ENCODE measurements at regions of chr2 and their contacts with region 1.

Region 1: GRCh38 chr2:202289394-202290204 is 24.0 kb downstream of the NOP58 start:
- DNase-seq: no peak
- ATAC-seq: no peak
- H3K4me3 ChIP-seq: no peak overlapping the region
- H3K27ac ChIP-seq: no peak overlapping the region
- H3K4me1 ChIP-seq: peaks cover 0 to 3% (median 0%) of the 10 kb centered on the region in 9 donors
- H3K27me3 ChIP-seq: no peaks in the 10 kb centered on the region
- CTCF ChIP-seq: no peak

Region 2: GRCh38 chr2:202529389-202529788 is 239.8 kb after region 1 on chr2:
- intact Hi-C with region 1: loop called in 1 of 10 experiments (anchors 10 kb)
- DNase-seq: no peak
- ATAC-seq: no peak
- H3K4me3 ChIP-seq: no peak overlapping the region
- H3K27ac ChIP-seq: no peak overlapping the region
- H3K4me1 ChIP-seq: peaks cover 0 to 13% (median 5%) of the 10 kb centered on the region in 9 donors
- H3K27me3 ChIP-seq: no peaks in the 10 kb centered on the region
- CTCF ChIP-seq: no peak

Measured in heart right ventricle (tissue), 16 donors.